ENCODE measurements at regions of chr2 and their contacts with region 1.

Region 1: DNA sequence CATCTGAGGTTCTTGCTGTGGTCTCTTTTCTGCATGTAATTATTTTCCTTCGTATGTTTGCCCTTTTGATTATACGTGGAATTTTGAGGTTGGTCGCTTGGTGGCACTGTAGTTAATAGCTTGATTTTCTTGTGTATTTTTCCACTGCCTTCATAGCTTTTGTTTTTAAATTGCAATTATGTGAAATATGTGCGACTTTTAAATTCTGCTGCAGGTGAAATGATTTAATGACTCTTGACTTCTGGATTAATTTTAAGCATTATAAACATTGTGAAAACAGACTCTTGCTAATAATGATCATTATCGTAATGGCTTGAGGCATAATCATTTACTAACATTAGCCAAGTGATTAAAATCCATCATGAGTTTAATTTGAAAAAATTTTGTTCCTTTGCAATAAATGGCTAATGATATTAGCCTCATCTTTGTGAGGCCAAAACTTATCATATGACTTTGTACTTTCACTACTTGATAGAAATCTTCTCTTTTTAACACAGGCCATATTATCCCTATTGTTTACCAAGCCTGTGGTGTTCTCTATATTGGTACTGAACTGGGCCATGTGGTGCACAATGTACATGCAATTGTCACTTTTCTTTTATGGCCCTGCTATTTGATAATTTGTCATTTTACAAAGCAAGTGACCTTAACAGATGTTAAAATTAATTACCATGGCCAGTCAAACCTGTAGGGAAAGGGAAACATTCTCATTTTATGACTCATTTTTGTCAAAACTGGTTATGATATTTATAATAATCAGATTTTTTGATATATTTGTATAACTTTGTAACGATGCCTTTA is 62.8 kb upstream of the NEUROD1 start:
- DNase-seq: peak; percentile 31 to 49
- H3K4me3 ChIP-seq: no peak overlapping the region
- H3K27ac ChIP-seq: no peak overlapping the region
- H3K4me1 ChIP-seq: no peaks in the 10 kb centered on the region
- H3K27me3 ChIP-seq: no peaks in the 10 kb centered on the region
- CTCF ChIP-seq: peak; percentile 32 to 87 (median 60)
- POLR2A ChIP-seq: no peak

Region 2: GRCh38 chr2:181483876-181484275 is 259.2 kb before region 1 on chr2:
- intact Hi-C with region 1: no loop called
- DNase-seq: no peak
- H3K4me3 ChIP-seq: no peak overlapping the region
- H3K27ac ChIP-seq: no peak overlapping the region
- H3K4me1 ChIP-seq: no peaks in the 10 kb centered on the region
- H3K27me3 ChIP-seq: no peaks in the 10 kb centered on the region
- CTCF ChIP-seq: no peak
- POLR2A ChIP-seq: no peak

Region 3: DNA sequence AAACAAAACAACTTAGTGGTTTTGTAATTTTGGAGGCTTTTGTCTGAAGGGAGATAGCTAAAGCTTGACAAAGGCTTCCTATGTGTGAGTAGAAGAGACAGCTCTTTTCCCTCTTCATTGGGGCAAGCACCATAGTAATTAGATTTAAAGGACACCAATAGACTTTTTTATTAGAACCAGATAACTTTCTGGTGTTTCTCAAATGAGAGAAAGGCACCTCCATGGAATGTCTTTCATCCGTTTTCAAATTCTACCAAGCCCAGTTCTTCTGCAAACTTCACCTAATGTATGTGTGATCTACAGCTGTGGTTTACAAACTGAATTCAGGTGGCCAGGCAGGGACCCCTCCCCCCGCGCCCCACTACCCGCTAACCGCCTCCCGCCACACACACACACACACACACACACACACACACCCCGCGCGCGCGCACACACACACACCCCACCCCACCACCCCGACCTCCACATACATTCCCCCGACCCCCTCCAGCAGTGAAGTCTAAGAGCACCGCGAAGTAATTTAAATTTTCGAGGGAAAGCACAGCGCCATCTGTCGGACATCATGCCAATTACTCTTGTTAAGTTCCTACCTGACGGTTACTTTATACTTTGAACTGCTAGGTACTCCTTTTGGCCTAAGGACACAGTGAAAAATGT is 210.9 kb after region 1 on chr2:
- intact Hi-C with region 1: loop called (anchors 10 kb)
- DNase-seq: peak; percentile 67 to 75
- H3K4me3 ChIP-seq: peak overlapping the region in 1 of 3 donors; percentile 33
- H3K27ac ChIP-seq: no peak overlapping the region
- H3K4me1 ChIP-seq: no peaks in the 10 kb centered on the region
- H3K27me3 ChIP-seq: no peaks in the 10 kb centered on the region
- CTCF ChIP-seq: peak; percentile 25 to 72 (median 51)
- POLR2A ChIP-seq: no peak

Region 4: GRCh38 chr2:182081602-182082260 is 338.6 kb after region 1 on chr2:
- intact Hi-C with region 1: loop called (anchors 5 kb)
- DNase-seq: no peak
- H3K4me3 ChIP-seq: no peak overlapping the region
- H3K27ac ChIP-seq: no peak overlapping the region
- H3K4me1 ChIP-seq: peaks cover 0 to 9% of the 10 kb centered on the region in 2 donors
- H3K27me3 ChIP-seq: no peaks in the 10 kb centered on the region
- CTCF ChIP-seq: no peak
- POLR2A ChIP-seq: no peak